ENCODE measurements at regions of chr3 and their contacts with region 1.

Region 1: DNA sequence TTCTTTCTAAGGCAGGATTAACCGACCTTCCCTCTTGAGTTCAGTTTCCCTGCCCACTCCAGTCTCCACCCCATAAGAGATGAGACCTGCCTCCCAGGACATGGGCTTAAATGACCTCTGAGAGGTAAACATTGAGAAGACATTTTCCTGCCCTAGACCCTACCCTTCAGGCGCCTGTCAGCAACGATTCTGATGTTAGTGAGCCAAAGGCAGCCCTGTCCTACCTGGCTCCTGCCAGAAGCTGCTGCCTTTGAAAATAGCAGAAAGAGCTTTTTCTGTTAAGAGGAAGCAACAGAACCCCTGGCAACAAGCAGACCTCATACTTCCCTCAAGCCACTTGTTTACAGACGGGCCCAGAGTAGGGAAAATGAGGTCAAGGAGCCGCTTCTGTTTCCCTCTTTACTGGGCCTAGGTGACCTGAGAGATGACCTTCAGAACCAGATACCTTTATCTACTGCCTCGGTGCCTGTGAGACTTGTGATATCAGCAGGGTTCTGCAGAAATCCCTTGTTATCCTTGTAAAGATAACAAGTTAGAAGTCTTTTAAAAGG is 52.0 kb downstream of the CD200R1L start:
- DNase-seq: peak in 5 of 9 donors; percentile 3 to 38 (median 20)
- ATAC-seq: peak; percentile 64
- H3K4me3 ChIP-seq: no peak overlapping the region
- H3K4me3 Mint-ChIP-seq: peak overlapping the region in 9 of 10 donors; percentile 4 to 65 (median 30)
- H3K27ac ChIP-seq: no peak overlapping the region
- H3K27ac Mint-ChIP-seq: peak overlapping the region; percentile 12 to 85 (median 68)
- H3K4me1 ChIP-seq: peaks cover 0 to 22% of the 10 kb centered on the region in 2 donors
- H3K4me1 Mint-ChIP-seq: peaks cover 15 to 41% (median 31%) of the 10 kb centered on the region in 7 donors
- H3K27me3 ChIP-seq: no peaks in the 10 kb centered on the region
- H3K27me3 Mint-ChIP-seq: no peaks in the 10 kb centered on the region

Region 2: DNA sequence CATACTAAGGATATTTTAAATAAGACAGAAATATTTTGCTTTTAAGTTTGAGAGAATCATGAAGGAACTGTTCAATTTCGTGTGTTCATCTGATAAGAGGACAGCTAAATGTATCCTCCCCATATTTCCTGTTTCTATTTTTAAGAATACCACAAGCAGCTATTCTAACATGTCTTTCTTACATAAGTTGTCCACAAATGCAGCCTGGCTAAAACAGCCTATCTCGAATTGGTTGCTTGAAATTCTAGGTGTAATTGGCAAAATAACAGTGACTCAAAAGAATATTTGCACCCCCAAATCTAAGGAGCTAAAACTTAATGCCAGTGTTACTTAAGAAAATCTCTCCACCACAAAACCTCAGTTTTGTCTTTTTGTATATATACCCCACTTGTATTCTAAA is 330.4 kb before region 1 on chr3:
- CTCF ChIA-PET with region 1: no interaction called
- POLR2A ChIA-PET with region 1: no interaction called
- intact Hi-C with region 1: loop called in 1 of 2 experiments (anchors 10 kb)
- DNase-seq: peak in 7 of 9 donors; percentile 28 to 56 (median 47)
- ATAC-seq: peak; percentile 83
- H3K4me3 ChIP-seq: peak overlapping the region; percentile 7
- H3K4me3 Mint-ChIP-seq: peak overlapping the region; percentile 39 to 84 (median 74)
- H3K27ac ChIP-seq: peak overlapping the region; percentile 43
- H3K27ac Mint-ChIP-seq: peak overlapping the region; percentile 55 to 96 (median 86)
- H3K4me1 ChIP-seq: peaks cover 54 to 63% of the 10 kb centered on the region in 2 donors
- H3K4me1 Mint-ChIP-seq: peaks cover 40 to 95% (median 88%) of the 10 kb centered on the region in 7 donors
- H3K27me3 ChIP-seq: no peaks in the 10 kb centered on the region
- H3K27me3 Mint-ChIP-seq: no peaks in the 10 kb centered on the region

Region 3: DNA sequence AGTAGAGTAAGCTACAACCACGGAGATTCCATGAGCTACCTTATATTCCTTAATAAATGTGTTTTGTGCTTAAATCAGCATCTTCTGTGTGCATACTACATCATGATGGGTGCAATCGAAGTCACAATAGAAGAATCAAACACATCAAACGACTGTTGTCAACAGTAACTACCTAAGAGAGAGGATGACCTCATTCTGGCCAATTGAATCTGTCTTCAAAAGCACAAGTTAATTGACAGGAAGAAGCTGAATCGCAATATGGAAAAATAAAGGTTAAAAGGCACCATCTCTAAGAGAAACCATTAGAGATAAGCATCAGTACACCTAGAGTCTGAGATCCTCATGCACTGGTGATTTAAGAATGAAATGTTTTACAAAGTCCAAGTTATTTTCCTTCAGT is 13.0 kb after region 1 on chr3:
- CTCF ChIA-PET with region 1: no interaction called
- POLR2A ChIA-PET with region 1: no interaction called
- intact Hi-C with region 1: loop called in 1 of 2 experiments (anchors 1 kb)
- DNase-seq: peak in 1 of 9 donors; percentile 7
- ATAC-seq: no peak
- H3K4me3 ChIP-seq: no peak overlapping the region
- H3K4me3 Mint-ChIP-seq: no peak overlapping the region
- H3K27ac ChIP-seq: no peak overlapping the region
- H3K27ac Mint-ChIP-seq: no peak overlapping the region
- H3K4me1 ChIP-seq: peaks cover 0 to 8% of the 10 kb centered on the region in 2 donors
- H3K4me1 Mint-ChIP-seq: peaks cover 14 to 40% (median 28%) of the 10 kb centered on the region in 7 donors
- H3K27me3 ChIP-seq: no peaks in the 10 kb centered on the region
- H3K27me3 Mint-ChIP-seq: peaks cover 0 to 5% (median 0%) of the 10 kb centered on the region in 5 donors

Measured in naive thymus-derived CD4-positive, alpha-beta T cell (primary cell).